GM23248 (cell line): ENCODE measurements at regions of chr11 and their contacts with region 1.

Region 1: GRCh38 chr11:46392421-46393230 is 1.1 kb upstream of the CHRM4 start:
- DNase-seq: peak; percentile 91
- H3K4me3 ChIP-seq: peak overlapping the region; percentile 65
- H3K27ac ChIP-seq: no peak overlapping the region
- H3K4me1 ChIP-seq: no peaks in the 10 kb centered on the region
- H3K27me3 ChIP-seq: peaks cover 7% of the 10 kb centered on the region

Region 2: GRCh38 chr11:46537537-46538295 is 145.1 kb after region 1 on chr11:
- in situ Hi-C with region 1: loop called (anchors 10 kb)
- DNase-seq: peak; percentile 76
- H3K4me3 ChIP-seq: no peak overlapping the region
- H3K27ac ChIP-seq: no peak overlapping the region
- H3K4me1 ChIP-seq: no peaks in the 10 kb centered on the region
- H3K27me3 ChIP-seq: no peaks in the 10 kb centered on the region